GM12878 (cell line): ENCODE measurements at regions of chr5 and their contacts with region 1.

Region 1: DNA sequence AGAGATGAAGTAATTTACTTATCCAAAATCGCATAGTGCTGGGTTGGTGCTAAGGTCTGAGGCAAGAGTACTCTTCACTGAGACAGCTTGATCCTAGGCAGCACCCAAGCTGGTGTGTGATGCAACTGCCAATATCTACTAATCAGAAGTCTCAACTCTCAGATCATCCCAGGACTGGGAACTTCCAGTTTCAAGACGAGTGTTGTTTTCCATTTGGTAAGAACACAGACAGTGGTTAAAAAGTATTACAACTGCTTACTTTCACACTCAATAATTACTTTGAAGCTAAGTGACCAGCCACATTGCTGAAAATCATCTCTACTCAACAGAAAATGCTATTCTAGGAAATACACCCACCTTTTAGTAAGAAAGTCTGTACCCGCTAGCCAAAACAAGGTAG is 45.3 kb downstream of the FBXW11 start:
- DNase-seq: peak; percentile 74
- ATAC-seq: peak; percentile 88
- H3K4me3 ChIP-seq: no peak overlapping the region
- H3K27ac ChIP-seq: peak overlapping the region; percentile 51
- H3K4me1 ChIP-seq: peaks cover 43% of the 10 kb centered on the region
- H3K27me3 ChIP-seq: no peaks in the 10 kb centered on the region
- CTCF ChIP-seq: no peak
- EP300 ChIP-seq: peak; percentile 16 to 81; a peak in 1 of 4 replicates
- POLR2A ChIP-seq: no peak
- RAD21 ChIP-seq: 0 out of 2 replicates have a peak, but pooled peaks have one; percentile 2

Region 2: DNA sequence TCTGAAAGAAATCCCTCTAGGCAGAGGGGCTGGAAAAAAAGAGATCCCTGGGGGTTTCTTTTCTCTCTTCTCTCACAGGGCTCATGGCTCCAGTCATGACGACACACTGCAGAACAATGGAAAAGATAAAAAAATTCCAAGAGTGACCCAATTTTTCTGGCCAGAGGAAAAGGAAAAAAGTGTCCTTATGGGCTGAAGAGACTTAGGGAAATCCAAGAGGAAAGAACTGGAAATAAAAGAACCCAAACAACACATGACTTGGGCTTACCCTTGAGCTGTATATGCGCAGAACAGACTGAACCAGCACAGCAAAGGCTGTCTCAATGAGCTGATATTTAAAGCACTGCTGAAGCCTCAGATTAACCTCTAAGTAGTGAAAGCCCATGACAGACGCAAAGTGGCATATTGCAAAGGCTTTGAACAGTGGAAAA is 73.1 kb before region 1 on chr5:
- CTCF ChIA-PET with region 1: no interaction called
- POLR2A ChIA-PET with region 1: no interaction called
- RAD21 ChIA-PET with region 1: no interaction called
- SMC1A ChIA-PET with region 1: no interaction called
- in situ Hi-C with region 1: no loop called
- intact Hi-C with region 1: no loop called
- DNase-seq: no peak
- ATAC-seq: no peak
- H3K4me3 ChIP-seq: no peak overlapping the region
- H3K27ac ChIP-seq: no peak overlapping the region
- H3K4me1 ChIP-seq: no peaks in the 10 kb centered on the region
- H3K27me3 ChIP-seq: no peaks in the 10 kb centered on the region
- CTCF ChIP-seq: no peak
- EP300 ChIP-seq: no peak
- POLR2A ChIP-seq: no peak
- RAD21 ChIP-seq: no peak

Region 3: GRCh38 chr5:171946000-171946774 is 14.9 kb before region 1 on chr5:
- CTCF ChIA-PET with region 1: interaction called, 13 read pairs
- POLR2A ChIA-PET with region 1: interaction called, 5 read pairs
- RAD21 ChIA-PET with region 1: no interaction called
- SMC1A ChIA-PET with region 1: interaction called, 18 read pairs
- in situ Hi-C with region 1: no loop called
- intact Hi-C with region 1: no loop called
- DNase-seq: no peak
- ATAC-seq: no peak
- H3K4me3 ChIP-seq: no peak overlapping the region
- H3K27ac ChIP-seq: no peak overlapping the region
- H3K4me1 ChIP-seq: peaks cover 6% of the 10 kb centered on the region; the same call in 1 of the 2 replicates
- H3K27me3 ChIP-seq: no peaks in the 10 kb centered on the region
- CTCF ChIP-seq: no peak
- EP300 ChIP-seq: no peak
- POLR2A ChIP-seq: no peak
- RAD21 ChIP-seq: no peak

Region 4: DNA sequence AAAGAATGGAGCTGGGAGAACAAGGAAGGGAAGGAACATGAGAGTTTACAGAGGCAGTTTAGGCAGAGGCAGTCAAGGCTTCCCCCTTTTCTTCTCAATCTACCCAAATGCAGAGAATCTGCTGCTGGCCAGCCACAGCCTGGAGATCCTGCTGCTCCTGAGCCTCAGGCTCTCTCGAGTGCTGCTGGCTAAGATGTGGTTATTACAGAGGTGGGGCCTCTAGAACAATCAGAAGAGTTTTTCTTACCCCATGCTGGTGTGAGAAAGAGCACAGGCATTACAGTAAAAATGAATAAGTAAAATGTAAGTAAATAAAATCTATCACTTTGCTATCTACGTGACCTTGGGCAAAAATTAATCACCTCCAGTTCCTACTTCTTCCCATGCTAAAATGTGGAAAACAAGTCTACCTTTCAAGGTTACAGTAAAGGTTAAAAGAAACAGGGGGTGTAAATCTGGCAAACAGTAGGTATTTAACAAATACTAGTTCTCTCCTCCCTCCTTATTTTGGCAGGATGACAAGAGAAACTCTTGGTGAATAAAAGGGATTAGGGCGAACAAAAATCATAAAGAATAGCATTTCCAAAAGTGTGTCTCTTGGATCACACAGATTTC is 14.3 kb after region 1 on chr5:
- CTCF ChIA-PET with region 1: interaction called, 21 read pairs
- POLR2A ChIA-PET with region 1: interaction called, 8 read pairs
- RAD21 ChIA-PET with region 1: no interaction called
- SMC1A ChIA-PET with region 1: interaction called, 16 read pairs
- in situ Hi-C with region 1: no loop called
- intact Hi-C with region 1: no loop called
- DNase-seq: no peak
- ATAC-seq: no peak
- H3K4me3 ChIP-seq: no peak overlapping the region; the same call in 1 of the 2 replicates
- H3K27ac ChIP-seq: no peak overlapping the region; the same call in 1 of the 2 replicates
- H3K4me1 ChIP-seq: peaks cover 18% of the 10 kb centered on the region
- H3K27me3 ChIP-seq: no peaks in the 10 kb centered on the region
- CTCF ChIP-seq: no peak
- EP300 ChIP-seq: no peak
- POLR2A ChIP-seq: no peak
- RAD21 ChIP-seq: no peak

Region 5: GRCh38 chr5:171984748-171985419 is 23.8 kb after region 1 on chr5:
- CTCF ChIA-PET with region 1: interaction called, 4 read pairs
- POLR2A ChIA-PET with region 1: interaction called, 4 read pairs
- RAD21 ChIA-PET with region 1: no interaction called
- SMC1A ChIA-PET with region 1: interaction called, 11 read pairs
- in situ Hi-C with region 1: no loop called
- intact Hi-C with region 1: no loop called
- DNase-seq: no peak
- ATAC-seq: peak; percentile 61
- H3K4me3 ChIP-seq: no peak overlapping the region
- H3K27ac ChIP-seq: peak overlapping the region; percentile 40; the same call in 1 of the 2 replicates
- H3K4me1 ChIP-seq: peaks cover 53% of the 10 kb centered on the region
- H3K27me3 ChIP-seq: no peaks in the 10 kb centered on the region
- CTCF ChIP-seq: no peak
- EP300 ChIP-seq: no peak
- POLR2A ChIP-seq: no peak
- RAD21 ChIP-seq: no peak